Mucosa of descending colon (tissue), 3 donors: ENCODE measurements at regions of chr18 and their contacts with region 1.

Region 1: DNA sequence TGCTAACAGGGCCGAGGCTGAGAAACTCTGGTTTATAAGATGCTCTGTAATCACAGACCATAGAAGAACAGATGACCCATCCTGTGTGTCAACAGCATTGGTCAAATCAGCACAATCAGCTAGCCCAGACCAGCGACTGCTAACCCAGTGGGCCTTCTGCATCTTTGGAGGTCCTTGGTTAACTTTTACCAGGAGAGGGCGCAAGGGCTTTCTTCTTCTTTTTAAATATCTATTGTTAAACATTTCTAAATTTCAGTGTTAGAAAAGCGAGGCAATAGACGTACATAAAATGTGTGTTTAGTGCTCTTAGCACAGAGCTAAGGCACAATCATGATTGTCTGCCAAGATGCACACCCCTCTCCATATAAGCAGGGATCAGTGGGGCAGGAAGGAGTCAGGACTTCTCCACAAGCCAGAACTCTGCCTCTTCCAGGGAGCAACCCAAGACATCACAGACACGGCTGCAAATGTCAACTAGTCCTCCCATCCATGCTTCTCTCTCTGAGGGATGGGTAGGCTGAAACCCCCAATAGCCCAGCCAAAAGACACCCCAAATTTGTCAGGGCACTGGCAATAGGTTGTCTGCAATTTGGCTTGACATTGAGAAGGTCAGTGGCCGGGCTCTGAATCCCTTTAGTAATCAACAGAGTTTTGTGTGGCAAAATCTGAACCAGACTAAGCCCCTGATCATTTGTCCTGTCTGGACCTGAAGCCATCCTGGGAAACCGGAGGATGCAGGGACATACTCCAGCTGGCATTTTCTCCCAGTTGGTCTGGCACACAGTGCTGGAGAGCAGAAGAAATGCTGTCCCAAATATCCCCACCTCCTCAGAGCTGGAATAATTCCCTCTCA is 188.2 kb downstream of the BCL2 start:
- DNase-seq: peak in 1 of 3 donors; percentile 91
- ATAC-seq: peak; percentile 59
- H3K4me3 ChIP-seq: no peak overlapping the region
- H3K4me1 ChIP-seq: peaks cover 19% of the 10 kb centered on the region
- CTCF ChIP-seq: peak; percentile 31

Region 2: GRCh38 chr18:63192885-63193349 is 61.6 kb after region 1 on chr18:
- intact Hi-C with region 1: no loop called
- DNase-seq: no peak
- ATAC-seq: no peak
- H3K4me3 ChIP-seq: no peak overlapping the region
- H3K4me1 ChIP-seq: peaks cover 18% of the 10 kb centered on the region
- CTCF ChIP-seq: no peak

Region 3: GRCh38 chr18:63329431-63330145 is 198.3 kb after region 1 on chr18:
- intact Hi-C with region 1: loop called (anchors 5 kb)
- DNase-seq: no peak
- ATAC-seq: no peak
- H3K4me3 ChIP-seq: no peak overlapping the region
- H3K4me1 ChIP-seq: no peaks in the 10 kb centered on the region
- CTCF ChIP-seq: no peak